ENCODE measurements at regions of chr12 and their contacts with region 1.

Region 1: GRCh38 chr12:123150744-123151456 is at the start of gene PITPNM2:
- DNase-seq: no peak
- total RNA-seq, gene PITPNM2: 17.2 to 24.7 TPM

Region 2: DNA sequence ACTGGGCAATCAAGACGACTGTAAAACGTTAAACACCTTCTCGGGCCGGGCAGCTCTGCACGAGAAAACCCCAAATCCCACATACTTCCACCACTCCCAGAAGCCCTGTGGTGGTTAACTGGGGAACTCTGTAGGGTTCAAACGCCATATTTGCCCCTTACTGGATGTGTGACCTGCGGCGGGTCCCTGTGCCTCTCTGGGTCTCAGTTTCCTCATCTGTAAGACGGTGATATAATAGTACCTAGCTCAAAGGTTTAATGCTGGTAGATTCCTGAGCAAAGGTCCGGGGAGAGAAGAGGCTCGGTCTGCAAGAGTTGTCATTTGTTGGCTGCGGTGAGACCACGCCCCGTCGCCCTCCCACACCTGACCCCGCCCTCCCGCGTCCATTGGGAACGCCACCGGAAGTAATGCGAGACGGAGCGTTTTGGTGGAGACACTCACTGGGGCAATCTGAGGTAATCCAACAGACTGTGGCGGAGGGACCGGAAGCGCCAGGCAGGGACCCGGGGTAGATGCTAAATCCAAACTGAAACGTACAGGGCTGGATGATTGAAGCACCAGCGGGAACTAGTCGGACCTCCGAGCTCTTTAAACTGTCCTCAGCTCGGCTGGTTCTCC is 176.5 kb before region 1 on chr12:
- intact Hi-C with region 1: loop called (anchors 5 to 10 kb)
- DNase-seq: peak; percentile 99

Region 3: GRCh38 chr12:123043536-123044001 is 107.3 kb before region 1 on chr12:
- intact Hi-C with region 1: loop called (anchors 5 to 10 kb)
- DNase-seq: peak; percentile 93

Region 4: GRCh38 chr12:123293178-123293760 is 142.4 kb after region 1 on chr12:
- intact Hi-C with region 1: no loop called
- DNase-seq: no peak

Measured in posterior vena cava (tissue), 2 donors.